Natural killer cell (primary cell): ENCODE measurements at regions of chr13 and their contacts with region 1.

Region 1: DNA sequence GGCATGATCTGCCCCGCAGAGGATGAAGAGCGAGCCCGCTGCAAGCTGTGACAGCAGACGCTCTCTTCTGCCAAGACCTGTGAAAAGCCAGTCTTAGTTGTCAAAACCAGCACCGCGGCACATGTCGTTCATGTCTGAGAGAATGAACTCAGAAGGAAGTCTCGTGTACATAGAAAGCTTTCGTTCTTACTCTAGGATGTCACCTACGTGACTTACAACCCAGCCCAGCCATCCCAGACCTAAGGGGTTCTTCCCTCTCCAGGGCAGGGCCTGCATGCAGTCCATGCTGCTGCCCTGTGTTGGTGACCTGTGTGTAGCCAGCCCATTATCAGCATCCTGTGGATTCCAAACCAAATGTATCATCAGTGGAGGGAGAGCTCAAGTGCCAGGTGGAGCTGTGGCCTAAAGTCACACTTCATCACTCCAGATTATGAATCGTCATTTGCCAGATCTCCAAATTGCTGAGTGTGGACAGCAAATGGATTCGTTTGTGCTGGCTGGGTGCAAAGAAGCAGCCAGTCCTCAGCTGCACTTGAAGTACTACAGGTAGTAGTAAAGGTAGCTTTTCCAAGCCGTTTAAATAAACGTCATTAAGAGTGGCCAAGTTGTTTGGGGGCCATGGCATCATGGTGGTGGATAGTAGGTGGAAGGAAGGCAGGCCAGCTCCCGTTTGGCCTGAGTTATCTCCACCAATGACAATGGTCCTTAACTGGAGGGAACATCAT is 73.9 kb upstream of the GPR183 start:
- DNase-seq: peak; percentile 55 to 80
- ATAC-seq: peak; percentile 79 to 91 (median 91)
- H3K4me3 ChIP-seq: no peak overlapping the region
- H3K4me3 Mint-ChIP-seq: peak overlapping the region; percentile 75
- H3K27ac ChIP-seq: peak overlapping the region; percentile 63
- H3K27ac Mint-ChIP-seq: peak overlapping the region; percentile 87 to 88
- H3K4me1 ChIP-seq: peaks cover 87% of the 10 kb centered on the region
- H3K4me1 Mint-ChIP-seq: peaks cover 49 to 58% of the 10 kb centered on the region in 2 donors
- H3K27me3 ChIP-seq: no peaks in the 10 kb centered on the region
- H3K27me3 Mint-ChIP-seq: peaks cover 0 to 3% of the 10 kb centered on the region in 2 donors
- CTCF ChIP-seq: no peak

Region 2: GRCh38 chr13:99307648-99308339 is 73.3 kb before region 1 on chr13:
- intact Hi-C with region 1: no loop called
- DNase-seq: peak in 1 of 2 donors; percentile 61
- ATAC-seq: peak; percentile 52 to 74 (median 70)
- H3K4me3 ChIP-seq: peak overlapping the region; percentile 40
- H3K4me3 Mint-ChIP-seq: peak overlapping the region; percentile 50
- H3K27ac ChIP-seq: peak overlapping the region; percentile 69
- H3K27ac Mint-ChIP-seq: peak overlapping the region; percentile 61 to 64
- H3K4me1 ChIP-seq: peaks cover 33% of the 10 kb centered on the region
- H3K4me1 Mint-ChIP-seq: peaks cover 49 to 67% of the 10 kb centered on the region in 2 donors
- H3K27me3 ChIP-seq: no peaks in the 10 kb centered on the region
- H3K27me3 Mint-ChIP-seq: no peaks in the 10 kb centered on the region
- CTCF ChIP-seq: no peak

Region 3: DNA sequence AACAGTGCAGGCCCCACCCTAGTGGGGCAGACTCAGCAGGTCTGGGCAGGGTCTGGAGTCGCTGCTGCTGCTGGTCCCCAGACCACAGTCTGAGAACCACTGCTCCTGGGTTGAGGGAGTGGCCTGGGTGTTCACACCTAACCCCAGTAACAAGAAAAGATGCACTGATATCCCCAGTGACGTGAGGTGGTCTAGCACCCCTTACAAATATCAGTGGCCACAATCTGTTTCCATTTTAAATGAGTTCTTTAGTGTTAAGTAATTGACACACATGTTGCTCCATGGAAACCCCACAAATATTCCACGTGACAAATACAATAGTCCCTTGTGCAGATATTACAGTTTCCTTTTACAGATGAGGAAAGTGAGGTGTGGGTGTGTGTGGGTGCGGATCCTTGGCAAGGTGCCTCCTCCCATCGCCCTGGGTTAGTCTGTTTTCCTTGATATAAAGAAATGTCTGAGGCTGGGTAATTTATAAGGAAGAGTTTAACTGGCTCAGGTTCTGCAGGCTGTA is 22.4 kb after region 1 on chr13:
- intact Hi-C with region 1: loop called (anchors 2 kb)
- DNase-seq: peak; percentile 57 to 68
- ATAC-seq: peak; percentile 87 to 94 (median 92)
- H3K4me3 ChIP-seq: no peak overlapping the region
- H3K4me3 Mint-ChIP-seq: peak overlapping the region; percentile 72
- H3K27ac ChIP-seq: no peak overlapping the region
- H3K27ac Mint-ChIP-seq: peak overlapping the region; percentile 91 to 94
- H3K4me1 ChIP-seq: peaks cover 20% of the 10 kb centered on the region
- H3K4me1 Mint-ChIP-seq: peaks cover 13 to 26% of the 10 kb centered on the region in 2 donors
- H3K27me3 ChIP-seq: no peaks in the 10 kb centered on the region
- H3K27me3 Mint-ChIP-seq: peaks cover 41 to 44% of the 10 kb centered on the region in 2 donors
- CTCF ChIP-seq: no peak